ENCODE measurements at regions of chr5 and their contacts with region 1.

Region 1: DNA sequence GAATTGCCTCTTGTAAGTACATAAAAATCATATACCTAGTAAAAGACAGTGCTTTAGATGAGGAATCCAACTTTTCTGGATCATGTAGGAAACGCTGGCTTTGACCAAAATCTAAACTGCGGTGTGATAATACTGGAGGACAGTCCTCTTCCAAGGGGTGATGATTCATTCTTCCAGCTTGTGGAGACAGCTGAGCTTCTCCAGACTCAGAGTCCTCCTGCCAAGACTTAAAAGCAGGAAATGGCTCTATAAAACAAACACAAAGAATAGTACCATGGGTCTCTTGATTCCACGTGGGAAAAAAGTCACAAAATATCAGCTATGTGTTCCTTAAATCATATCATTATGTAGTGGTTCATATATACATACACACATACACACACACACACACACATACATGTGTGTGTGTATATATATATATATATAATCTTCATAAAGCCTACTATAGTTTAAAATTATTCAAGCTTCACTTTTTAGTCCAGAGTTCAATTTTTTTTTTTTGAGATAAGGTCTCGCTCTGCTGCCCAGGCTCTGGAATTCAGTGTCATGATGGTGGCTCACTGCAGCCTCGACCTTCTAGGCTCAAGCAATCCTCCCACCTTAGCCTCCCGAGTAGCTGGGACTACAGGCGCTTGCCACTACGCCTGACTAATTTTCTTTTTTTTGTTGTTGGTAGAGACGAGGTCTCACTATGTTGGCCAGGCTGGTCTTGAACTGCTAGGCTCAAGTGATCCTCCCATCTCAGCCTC is 65.0 kb downstream of the PKD2L2 start:
- DNase-seq: no peak

Region 2: GRCh38 chr5:137858223-137858916 is 95.9 kb before region 1 on chr5:
- intact Hi-C with region 1: no loop called
- DNase-seq: no peak

Region 3: GRCh38 chr5:137914758-137915157 is 39.5 kb before region 1 on chr5:
- intact Hi-C with region 1: loop called in 1 of 2 experiments (anchors 1 kb)
- DNase-seq: no peak